Dendritic cell treated with granulocyte-macrophage colony-stimulating factor and Interleukin-4, amounts not matched to agents 40 ng/mL and 50 ng/mL, for 4 days (primary cell): ENCODE measurements at regions of chr12 and their contacts with region 1.

Region 1: DNA sequence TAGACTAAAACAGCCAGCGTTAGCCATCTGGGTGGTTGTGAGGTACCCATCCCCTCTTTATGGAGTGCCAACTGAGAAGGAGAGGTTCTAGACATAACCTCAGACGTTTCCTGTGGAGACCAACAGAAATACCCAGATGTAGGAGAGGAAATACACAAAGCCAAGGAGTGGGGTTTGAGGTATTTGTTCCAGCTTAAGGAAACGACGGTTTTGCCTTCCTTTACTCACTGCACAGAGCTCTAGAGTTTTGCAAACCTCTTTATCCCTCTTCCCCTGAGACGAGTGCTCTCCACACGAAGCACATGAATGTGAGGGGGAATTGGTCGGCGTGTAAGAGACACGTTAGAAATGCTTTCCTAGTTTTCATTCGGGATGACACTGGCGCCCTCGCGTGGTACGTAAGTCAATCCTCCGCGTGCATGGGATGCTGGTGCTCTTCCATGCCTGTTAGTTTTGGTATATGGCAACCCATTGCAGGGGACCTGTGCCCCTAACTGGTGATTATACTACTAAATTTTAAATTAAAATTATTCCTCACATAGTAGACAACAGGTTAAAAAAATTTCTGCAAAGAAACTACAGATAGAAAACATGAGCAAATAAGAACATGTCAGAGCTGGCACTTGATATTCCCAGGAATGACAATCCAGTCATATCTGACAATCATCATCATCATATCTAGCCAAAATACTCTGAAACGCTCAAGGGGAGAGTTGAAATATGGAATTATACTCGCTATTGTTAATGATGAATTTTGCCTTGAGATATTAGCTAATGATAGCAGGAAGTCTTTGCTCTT is 121.7 kb downstream of the PPM1H start:
- H3K4me3 Mint-ChIP-seq: peak overlapping the region; percentile 48
- H3K27ac Mint-ChIP-seq: no peak overlapping the region
- H3K4me1 Mint-ChIP-seq: peaks cover 19% of the 10 kb centered on the region
- H3K27me3 Mint-ChIP-seq: no peaks in the 10 kb centered on the region

Region 2: DNA sequence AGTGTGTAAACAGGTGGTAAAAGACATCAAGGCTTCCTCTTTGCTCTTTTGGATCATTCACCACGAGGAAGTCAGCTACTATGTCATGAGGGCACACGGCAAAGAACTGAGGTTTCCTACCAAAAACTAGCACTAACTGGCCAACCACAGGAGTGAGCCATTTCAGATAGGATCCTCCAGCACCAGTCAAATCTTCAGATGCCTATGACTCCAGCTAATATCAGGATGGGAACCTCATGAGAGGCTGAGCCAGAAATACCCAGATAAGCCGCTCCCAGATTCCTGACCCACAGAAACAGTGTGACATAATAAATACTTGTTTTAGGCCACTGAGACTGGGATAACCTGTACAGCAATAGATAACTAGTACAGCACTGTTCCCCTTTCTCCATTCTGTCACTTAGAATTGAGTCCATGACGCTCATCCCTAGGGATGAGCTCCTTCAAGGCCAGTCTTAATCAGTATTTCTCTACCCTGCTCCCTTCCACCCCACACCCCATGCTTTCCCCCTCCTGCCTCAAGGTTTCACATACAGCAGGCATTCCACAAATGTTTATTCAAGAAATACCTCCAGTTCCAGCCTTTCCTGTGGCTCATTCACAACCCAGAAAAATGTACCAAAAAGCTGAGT is 53.3 kb after region 1 on chr12:
- intact Hi-C with region 1: no loop called
- H3K4me3 Mint-ChIP-seq: no peak overlapping the region
- H3K27ac Mint-ChIP-seq: no peak overlapping the region
- H3K4me1 Mint-ChIP-seq: no peaks in the 10 kb centered on the region
- H3K27me3 Mint-ChIP-seq: no peaks in the 10 kb centered on the region

Region 3: DNA sequence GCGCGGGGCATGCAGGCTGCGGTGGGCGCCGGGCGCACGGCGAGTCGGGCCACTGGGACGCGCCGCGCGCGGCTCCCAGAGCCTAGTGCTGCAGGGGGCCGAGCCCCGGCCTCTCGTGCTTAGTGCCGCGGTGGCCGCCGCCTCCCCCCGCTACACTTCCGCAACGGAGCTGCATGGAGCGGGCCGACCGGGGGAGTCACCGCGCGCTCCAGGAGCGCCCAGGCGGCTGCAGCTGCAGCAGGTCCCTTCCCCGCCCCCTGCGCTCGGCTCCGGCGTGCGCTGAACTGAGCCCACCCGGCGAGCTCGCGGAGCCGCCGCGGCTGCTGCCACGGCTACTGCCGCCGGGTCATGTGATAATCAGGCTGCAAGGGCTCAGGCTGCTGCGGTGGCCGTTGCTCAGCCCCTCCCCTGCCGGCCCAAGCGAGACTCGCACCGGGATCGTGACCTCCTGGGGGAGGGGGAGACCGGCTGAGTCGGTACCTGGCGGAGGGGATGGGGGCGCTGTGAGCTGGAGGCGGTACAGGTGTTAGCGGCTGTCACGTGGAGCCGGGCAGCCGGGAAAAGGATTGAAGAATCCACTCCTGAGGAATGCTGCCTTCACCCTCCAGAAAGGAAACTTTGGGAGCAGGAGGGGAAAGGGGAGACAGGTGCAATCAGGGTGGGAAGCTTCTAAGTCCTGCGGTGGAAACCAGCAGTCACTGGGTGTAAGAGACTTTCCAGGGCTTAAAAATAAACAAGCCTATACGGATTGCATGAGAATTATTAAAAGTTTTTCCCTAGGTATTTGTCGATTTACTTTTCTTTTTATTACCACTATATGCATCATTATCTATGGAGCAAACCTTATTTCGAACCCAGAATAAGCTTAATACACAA is 121.8 kb after region 1 on chr12 and contains the start of gene PPM1H:
- intact Hi-C with region 1: loop called (anchors 5 kb)
- H3K4me3 Mint-ChIP-seq: peak within 1 kb of the TSS; percentile 94
- H3K27ac Mint-ChIP-seq: peak within 1 kb of the TSS; percentile 83
- H3K4me1 Mint-ChIP-seq: peaks cover 28% of the 10 kb centered on the region
- H3K27me3 Mint-ChIP-seq: peaks cover 15% of the 10 kb centered on the region